GM12878 (cell line): ENCODE measurements at regions of chr1 and their contacts with region 1.

Region 1: DNA sequence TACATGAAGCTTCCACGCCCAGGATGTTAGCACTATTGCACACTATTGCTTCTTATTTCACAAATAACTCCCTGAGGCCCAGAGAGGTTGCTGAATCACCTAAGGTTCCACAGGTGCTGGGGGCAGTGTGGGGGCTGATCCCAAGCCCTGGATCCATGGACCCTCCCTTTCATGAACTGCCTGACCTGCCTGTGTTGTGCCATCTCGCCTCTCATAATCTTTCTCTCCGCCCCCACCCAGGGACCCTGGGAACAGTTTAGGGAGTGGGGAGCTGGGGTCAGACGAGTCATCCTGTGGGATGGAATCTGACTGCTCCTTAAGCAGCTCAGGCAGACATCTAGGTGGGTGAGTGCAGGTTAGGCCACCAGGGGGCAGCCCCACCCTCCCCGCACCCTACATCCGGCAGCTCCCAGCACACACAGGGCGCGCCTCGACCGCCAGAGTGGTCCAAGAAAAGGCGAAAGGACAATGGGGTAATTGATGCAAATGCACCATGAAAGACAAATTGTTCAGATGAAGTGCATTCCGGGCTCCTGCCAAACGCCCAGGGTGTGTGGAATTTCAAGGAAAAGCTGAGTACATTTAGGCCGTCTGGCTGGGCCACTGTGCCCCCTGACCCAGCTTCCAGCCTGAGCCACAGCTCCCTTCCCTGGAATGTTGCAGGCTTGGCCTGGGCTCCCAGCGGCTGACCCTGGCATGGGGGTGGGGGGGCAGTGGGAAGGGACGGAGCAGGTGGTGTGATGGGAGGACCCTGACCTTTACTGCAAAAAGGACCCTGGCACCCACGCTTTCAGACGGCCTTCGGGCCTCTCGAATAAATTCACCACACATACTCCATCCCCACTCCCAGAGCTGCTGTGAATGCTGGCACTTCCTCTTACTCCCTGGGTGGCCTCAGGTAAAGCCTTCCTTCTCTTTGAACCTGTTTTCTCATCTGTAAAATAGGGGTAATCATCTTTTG is 20.8 kb downstream of the PHLDA3 start:
- DNase-seq: no peak
- ATAC-seq: peak; percentile 98
- H3K4me3 ChIP-seq: no peak overlapping the region
- H3K27ac ChIP-seq: no peak overlapping the region
- H3K4me1 ChIP-seq: peaks cover 16% of the 10 kb centered on the region
- H3K27me3 ChIP-seq: no peaks in the 10 kb centered on the region
- CTCF ChIP-seq: peak; percentile 87 to 95 (median 91)
- EP300 ChIP-seq: no peak
- POLR2A ChIP-seq: no peak
- RAD21 ChIP-seq: peak; percentile 77

Region 2: GRCh38 chr1:201385299-201385891 is 62.8 kb before region 1 on chr1:
- CTCF ChIA-PET with region 1: interaction called, 17 read pairs
- POLR2A ChIA-PET with region 1: no interaction called
- RAD21 ChIA-PET with region 1: interaction called, 6 read pairs
- SMC1A ChIA-PET with region 1: interaction called, 6 read pairs
- in situ Hi-C with region 1: no loop called
- intact Hi-C with region 1: no loop called
- DNase-seq: no peak
- ATAC-seq: peak; percentile 99
- H3K4me3 ChIP-seq: no peak overlapping the region
- H3K27ac ChIP-seq: no peak overlapping the region
- H3K4me1 ChIP-seq: no peaks in the 10 kb centered on the region
- H3K27me3 ChIP-seq: no peaks in the 10 kb centered on the region; a peak in 1 of 4 replicates
- CTCF ChIP-seq: peak; percentile 93 to 97 (median 96); a peak in 5 of 6 replicates
- EP300 ChIP-seq: no peak
- POLR2A ChIP-seq: no peak
- RAD21 ChIP-seq: peak; percentile 78

Region 3: GRCh38 chr1:201468844-201469511 is 20.8 kb after region 1 on chr1 and contains the start of gene PHLDA3:
- CTCF ChIA-PET with region 1: interaction called, 149 read pairs
- POLR2A ChIA-PET with region 1: interaction called, 17 read pairs
- RAD21 ChIA-PET with region 1: interaction called, 36 read pairs
- SMC1A ChIA-PET with region 1: interaction called, 9 read pairs
- in situ Hi-C with region 1: no loop called
- intact Hi-C with region 1: no loop called
- DNase-seq: no peak
- ATAC-seq: peak; percentile 88
- H3K4me3 ChIP-seq: peak within 1 kb of the TSS; percentile 96
- H3K27ac ChIP-seq: peak within 1 kb of the TSS; percentile 67
- H3K4me1 ChIP-seq: peaks cover 11% of the 10 kb centered on the region
- H3K27me3 ChIP-seq: no peaks in the 10 kb centered on the region
- CTCF ChIP-seq: no peak
- EP300 ChIP-seq: 0 out of 4 replicates have a peak, but pooled peaks of 1 of the 2 experiments have one; percentile 17
- POLR2A ChIP-seq: peak; percentile 89
- RAD21 ChIP-seq: no peak
- polyA plus RNA-seq, gene PHLDA3: 0.60 to 2.0 TPM

Region 4: DNA sequence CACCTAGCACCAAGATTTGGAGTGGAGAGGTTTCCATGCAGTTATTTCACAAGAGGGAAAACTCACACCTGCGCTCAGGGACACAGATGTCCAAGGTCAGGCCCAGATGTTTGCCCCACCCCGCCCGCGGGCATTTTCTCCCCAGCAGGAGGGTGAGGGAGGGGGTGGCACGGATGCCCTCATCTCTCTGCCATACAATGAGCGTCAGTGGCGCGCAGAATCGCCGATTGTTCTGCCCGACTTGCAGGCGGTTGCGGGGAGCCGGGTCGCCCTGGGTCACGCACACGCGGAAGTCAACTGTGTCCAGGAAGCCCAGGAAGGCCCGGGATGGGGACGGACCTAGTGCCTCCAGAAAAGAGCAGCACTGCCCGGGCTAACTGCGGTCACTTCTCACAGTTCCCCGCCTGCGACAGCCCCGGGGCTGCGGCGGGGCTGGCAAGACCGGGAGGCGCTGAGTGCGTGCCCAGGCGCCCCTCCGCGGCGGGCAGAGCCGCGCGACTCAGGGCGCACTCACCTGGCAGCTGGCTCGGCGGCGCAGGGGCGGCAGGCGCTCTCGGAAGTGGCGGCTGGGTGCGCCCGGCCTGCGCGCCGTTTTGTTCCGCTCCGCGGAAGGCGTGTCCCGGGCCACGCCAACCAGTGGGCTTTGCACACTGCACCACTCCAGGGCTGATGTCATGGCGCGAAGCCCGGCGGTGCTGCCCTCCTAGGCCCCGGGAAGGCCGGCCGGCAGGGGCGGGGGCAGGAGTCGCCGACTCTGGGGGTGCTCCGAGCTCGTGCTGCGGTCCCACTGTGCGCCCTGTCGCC is 58.6 kb after region 1 on chr1 and contains the start of gene CSRP1:
- CTCF ChIA-PET with region 1: interaction called, 309 read pairs
- POLR2A ChIA-PET with region 1: interaction called, 32 read pairs
- RAD21 ChIA-PET with region 1: interaction called, 146 read pairs
- SMC1A ChIA-PET with region 1: interaction called, 103 read pairs
- in situ Hi-C with region 1: loop called (anchors 5 kb)
- intact Hi-C with region 1: no loop called
- DNase-seq: peak; percentile 39
- ATAC-seq: peak; percentile 91
- H3K4me3 ChIP-seq: peak within 1 kb of the TSS; percentile 95
- H3K27ac ChIP-seq: peak within 1 kb of the TSS; percentile 83
- H3K4me1 ChIP-seq: peaks cover 37% of the 10 kb centered on the region
- H3K27me3 ChIP-seq: no peaks in the 10 kb centered on the region
- CTCF ChIP-seq: peak in 1 of 3 experiments; percentile 21; a peak in 1 of 6 replicates
- EP300 ChIP-seq: no peak
- POLR2A ChIP-seq: peak; percentile 96
- RAD21 ChIP-seq: no peak
- polyA plus RNA-seq, gene CSRP1: 23.4 to 24.3 TPM